Cardiac septum (tissue), 1 donor: ENCODE measurements at regions of chr16 and their contacts with region 1.

Region 1: GRCh38 chr16:67935402-67936123 is 1.1 kb downstream of the PSMB10 start:
- DNase-seq: peak; percentile 98

Region 2: GRCh38 chr16:67833418-67834241 is 101.9 kb before region 1 on chr16:
- intact Hi-C with region 1: loop called (anchors 5 kb)
- DNase-seq: peak; percentile 98

Region 3: GRCh38 chr16:67846320-67847063 is 89.1 kb before region 1 on chr16 and contains the start of gene NUTF2:
- intact Hi-C with region 1: no loop called
- DNase-seq: peak; percentile 98
- total RNA-seq, gene NUTF2: 87.1 TPM

Region 4: GRCh38 chr16:67963662-67964321 is 28.2 kb after region 1 on chr16:
- intact Hi-C with region 1: loop called (anchors 2 kb)
- DNase-seq: no peak

Region 5: GRCh38 chr16:68200088-68200783 is 264.7 kb after region 1 on chr16:
- intact Hi-C with region 1: no loop called
- DNase-seq: no peak